MCF 10A (cell line): ENCODE measurements at regions of chr2 and their contacts with region 1.

Region 1: GRCh38 chr2:80073134-80073561 is 231.4 kb downstream of the LRRTM1 start:
- DNase-seq: peak; percentile 76
- H3K4me3 Mint-ChIP-seq: no peak overlapping the region
- H3K27ac Mint-ChIP-seq: no peak overlapping the region
- H3K4me1 Mint-ChIP-seq: peaks cover 13% of the 10 kb centered on the region
- H3K27me3 Mint-ChIP-seq: no peaks in the 10 kb centered on the region
- CTCF ChIP-seq: peak; percentile 63

Region 2: DNA sequence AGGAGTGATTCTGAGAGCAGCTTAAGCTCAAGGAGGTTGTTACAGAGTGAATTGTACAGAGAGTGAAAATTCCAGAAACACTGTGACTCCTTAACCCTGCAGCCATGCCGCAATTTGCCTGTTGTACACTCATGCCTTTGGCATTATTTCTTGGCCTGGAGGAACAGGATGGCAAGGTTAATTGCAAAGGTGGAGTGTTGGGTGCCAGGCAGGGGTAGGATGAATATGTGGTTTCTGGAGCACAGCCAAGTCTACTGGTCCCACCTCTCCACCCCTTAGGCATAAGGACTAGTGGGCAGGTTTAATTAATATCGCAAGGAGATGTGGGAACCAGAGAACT is 18.8 kb before region 1 on chr2:
- CTCF ChIA-PET with region 1: interaction called, 21 read pairs
- POLR2A ChIA-PET with region 1: interaction called, 3 read pairs
- intact Hi-C with region 1: no loop called
- DNase-seq: peak; percentile 88
- H3K4me3 Mint-ChIP-seq: no peak overlapping the region
- H3K27ac Mint-ChIP-seq: peak overlapping the region; percentile 40
- H3K4me1 Mint-ChIP-seq: peaks cover 17% of the 10 kb centered on the region
- H3K27me3 Mint-ChIP-seq: no peaks in the 10 kb centered on the region
- CTCF ChIP-seq: no peak

Region 3: GRCh38 chr2:80092474-80092873 is 19.3 kb after region 1 on chr2:
- CTCF ChIA-PET with region 1: interaction called, 24 read pairs
- POLR2A ChIA-PET with region 1: no interaction called
- intact Hi-C with region 1: no loop called
- DNase-seq: no peak
- H3K4me3 Mint-ChIP-seq: no peak overlapping the region
- H3K27ac Mint-ChIP-seq: no peak overlapping the region
- H3K4me1 Mint-ChIP-seq: no peaks in the 10 kb centered on the region
- H3K27me3 Mint-ChIP-seq: no peaks in the 10 kb centered on the region
- CTCF ChIP-seq: no peak

Region 4: DNA sequence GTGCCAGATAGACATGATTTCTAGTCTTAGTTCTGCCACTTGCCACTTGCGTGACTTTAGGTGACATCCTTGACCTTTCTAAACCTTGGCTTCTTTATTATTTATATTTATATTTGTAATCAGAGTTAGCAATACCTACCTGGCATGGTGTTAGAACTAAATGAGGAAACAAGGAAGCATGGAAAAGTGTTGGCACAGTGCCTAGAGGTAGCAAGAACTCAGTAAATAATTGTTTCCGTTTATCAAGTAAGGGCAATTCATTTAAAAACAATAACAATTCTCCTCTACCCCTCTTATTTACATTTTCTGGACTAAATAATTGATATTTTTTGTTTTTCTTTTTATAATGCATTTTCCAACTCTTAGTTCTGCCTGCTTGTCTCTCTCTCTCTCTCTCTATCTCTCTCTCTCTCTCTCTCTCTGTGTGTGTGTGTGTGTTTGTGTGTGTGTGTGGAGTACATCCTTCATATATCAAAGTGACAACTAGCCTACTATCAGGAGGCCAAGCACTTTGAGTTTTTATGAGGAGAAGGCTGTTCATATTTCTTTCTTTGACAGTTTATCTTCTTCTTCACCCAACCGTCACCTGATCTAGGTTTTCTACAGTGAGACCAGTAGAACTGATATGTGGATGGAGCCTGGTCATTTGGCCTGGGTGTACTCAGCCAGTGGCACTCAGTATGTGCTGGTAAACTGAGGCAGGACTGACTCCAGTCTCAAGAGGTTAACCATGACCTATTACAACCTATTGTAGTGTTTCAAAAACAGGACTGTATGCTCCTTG is 96.9 kb after region 1 on chr2:
- CTCF ChIA-PET with region 1: no interaction called
- POLR2A ChIA-PET with region 1: no interaction called
- intact Hi-C with region 1: no loop called
- DNase-seq: no peak
- H3K4me3 Mint-ChIP-seq: no peak overlapping the region
- H3K27ac Mint-ChIP-seq: no peak overlapping the region
- H3K4me1 Mint-ChIP-seq: no peaks in the 10 kb centered on the region
- H3K27me3 Mint-ChIP-seq: no peaks in the 10 kb centered on the region
- CTCF ChIP-seq: no peak

Region 5: GRCh38 chr2:80326214-80326613 is 253.1 kb after region 1 on chr2:
- CTCF ChIA-PET with region 1: interaction called, 3 read pairs
- POLR2A ChIA-PET with region 1: no interaction called
- intact Hi-C with region 1: loop called (anchors 1 kb)
- DNase-seq: peak; percentile 53
- H3K4me3 Mint-ChIP-seq: no peak overlapping the region
- H3K27ac Mint-ChIP-seq: no peak overlapping the region
- H3K4me1 Mint-ChIP-seq: peaks cover 2% of the 10 kb centered on the region
- H3K27me3 Mint-ChIP-seq: no peaks in the 10 kb centered on the region
- CTCF ChIP-seq: peak; percentile 51

Region 6: DNA sequence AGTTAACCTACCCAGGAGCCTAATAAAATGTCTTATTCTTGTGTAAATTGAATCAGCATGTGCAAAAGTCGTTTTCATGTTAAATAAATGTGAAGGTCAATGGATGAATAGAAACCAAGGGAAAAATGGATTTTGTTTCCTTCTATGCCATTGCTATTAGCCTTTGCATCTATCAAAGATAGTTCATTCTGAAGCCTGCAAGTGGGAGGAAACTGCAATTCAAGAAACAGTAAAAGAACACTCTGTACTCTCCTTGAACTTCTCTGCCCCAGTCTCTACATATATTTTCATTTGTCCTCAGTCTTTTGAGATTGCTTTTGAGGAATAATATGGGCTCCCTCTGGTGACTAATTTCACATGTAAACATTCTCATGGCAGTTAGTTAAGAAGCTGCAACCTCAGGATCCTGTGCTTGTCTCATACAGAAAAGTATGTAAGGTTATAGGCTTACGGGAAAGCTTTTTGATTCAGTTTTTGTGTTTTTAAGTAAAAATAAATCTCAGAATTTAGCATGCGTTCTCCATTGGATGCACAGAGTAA is 1821.4 kb after region 1 on chr2:
- CTCF ChIA-PET with region 1: interaction called, 3 read pairs
- POLR2A ChIA-PET with region 1: no interaction called
- intact Hi-C with region 1: loop called (anchors 10 kb)
- DNase-seq: peak; percentile 52
- H3K4me3 Mint-ChIP-seq: no peak overlapping the region
- H3K27ac Mint-ChIP-seq: no peak overlapping the region
- H3K4me1 Mint-ChIP-seq: peaks cover 7% of the 10 kb centered on the region
- H3K27me3 Mint-ChIP-seq: no peaks in the 10 kb centered on the region
- CTCF ChIP-seq: peak; percentile 35